Transverse colon (tissue), 4 donors: ENCODE measurements at regions of chr11 and their contacts with region 1.

Region 1: GRCh38 chr11:95512682-95513081 is 276.9 kb downstream of the FAM76B start:
- DNase-seq: peak; percentile 23
- H3K4me3 ChIP-seq: no peak overlapping the region
- H3K27ac ChIP-seq: peak overlapping the region; percentile 59 to 77 (median 74)
- H3K4me1 ChIP-seq: peaks cover 0 to 7% (median 0%) of the 10 kb centered on the region in 4 donors
- H3K27me3 ChIP-seq: no peaks in the 10 kb centered on the region
- CTCF ChIP-seq: no peak
- EP300 ChIP-seq: no peak
- POLR2A ChIP-seq: no peak

Region 2: DNA sequence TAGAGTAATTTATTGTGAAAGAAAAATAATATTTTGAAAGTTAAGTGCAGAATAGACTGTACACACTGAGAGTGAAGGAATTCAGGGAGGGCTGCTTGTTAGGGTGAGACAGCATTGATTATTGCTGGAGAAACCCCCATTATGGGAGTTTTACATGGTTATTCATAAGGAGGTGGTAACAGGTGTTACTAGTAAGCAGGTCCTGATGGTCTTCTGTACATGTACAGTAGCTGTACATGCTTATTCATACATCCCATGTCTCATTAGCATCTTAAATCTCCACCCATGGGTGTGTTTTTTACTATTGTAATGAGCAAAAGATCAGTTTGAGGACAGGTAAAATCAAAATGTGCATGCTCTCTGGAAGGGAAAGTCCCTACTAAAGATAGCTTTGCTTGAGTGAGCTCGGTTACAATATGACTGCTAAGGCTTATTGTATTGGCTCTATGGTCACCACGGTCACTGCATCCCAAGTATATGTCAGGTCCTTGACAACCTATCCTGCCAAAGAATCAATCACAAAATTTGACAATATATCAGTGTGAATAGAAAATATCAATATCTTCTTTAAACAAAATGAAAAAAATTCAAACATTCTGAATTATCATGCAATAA is 457.3 kb before region 1 on chr11:
- in situ Hi-C with region 1: no loop called
- intact Hi-C with region 1: no loop called
- DNase-seq: no peak
- H3K4me3 ChIP-seq: no peak overlapping the region
- H3K27ac ChIP-seq: no peak overlapping the region
- H3K4me1 ChIP-seq: no peaks in the 10 kb centered on the region
- H3K27me3 ChIP-seq: peaks cover 5% of the 10 kb centered on the region
- CTCF ChIP-seq: no peak
- EP300 ChIP-seq: no peak
- POLR2A ChIP-seq: no peak

Region 3: GRCh38 chr11:96033599-96033998 is 520.9 kb after region 1 on chr11:
- in situ Hi-C with region 1: no loop called
- intact Hi-C with region 1: loop called (anchors 5 kb)
- DNase-seq: no peak
- H3K4me3 ChIP-seq: no peak overlapping the region
- H3K27ac ChIP-seq: no peak overlapping the region
- H3K4me1 ChIP-seq: peaks cover 0 to 31% (median 6%) of the 10 kb centered on the region in 4 donors
- H3K27me3 ChIP-seq: no peaks in the 10 kb centered on the region
- CTCF ChIP-seq: no peak
- EP300 ChIP-seq: no peak
- POLR2A ChIP-seq: no peak